RWPE1 (cell line): ENCODE measurements at regions of chr1 and their contacts with region 1.

Region 1: GRCh38 chr1:78132174-78132947 is 86.6 kb downstream of the GIPC2 start:
- DNase-seq: no peak
- H3K27ac ChIP-seq: no peak overlapping the region
- CTCF ChIP-seq: no peak

Region 2: DNA sequence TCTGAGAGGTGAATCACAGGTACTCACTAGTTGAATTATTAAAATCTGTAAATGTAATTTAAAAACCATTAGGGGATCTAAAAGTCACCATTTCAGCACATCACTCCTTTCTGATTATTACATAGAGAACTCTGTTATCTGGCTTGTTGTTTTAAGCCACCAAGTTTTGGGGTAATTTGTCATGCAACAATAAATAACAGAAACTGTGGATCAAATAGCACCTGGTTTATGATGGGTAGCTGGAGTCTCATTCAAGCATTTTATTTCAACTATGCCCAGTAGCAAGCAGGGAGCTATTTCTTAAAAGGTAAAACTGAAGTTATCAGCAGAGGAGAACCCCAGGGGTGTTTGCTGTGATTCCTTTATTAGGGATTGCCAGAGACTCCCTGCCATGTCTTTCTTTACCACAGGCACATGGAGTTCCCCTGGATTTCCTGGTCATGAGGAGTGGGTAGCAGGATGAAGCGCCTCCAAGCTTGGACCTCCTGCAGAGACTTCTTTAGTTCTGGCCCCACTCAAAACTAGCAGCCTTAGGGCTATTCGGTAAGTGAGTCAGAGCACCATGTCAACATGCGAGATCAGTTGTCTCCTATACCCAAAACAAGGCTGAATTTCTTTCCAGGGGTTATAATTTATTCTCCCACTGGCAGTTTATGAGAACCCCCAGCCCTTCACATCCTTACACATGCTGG is 92.6 kb after region 1 on chr1:
- CTCF ChIA-PET with region 1: no interaction called
- POLR2A ChIA-PET with region 1: no interaction called
- DNase-seq: no peak
- H3K27ac ChIP-seq: no peak overlapping the region
- CTCF ChIP-seq: no peak

Region 3: DNA sequence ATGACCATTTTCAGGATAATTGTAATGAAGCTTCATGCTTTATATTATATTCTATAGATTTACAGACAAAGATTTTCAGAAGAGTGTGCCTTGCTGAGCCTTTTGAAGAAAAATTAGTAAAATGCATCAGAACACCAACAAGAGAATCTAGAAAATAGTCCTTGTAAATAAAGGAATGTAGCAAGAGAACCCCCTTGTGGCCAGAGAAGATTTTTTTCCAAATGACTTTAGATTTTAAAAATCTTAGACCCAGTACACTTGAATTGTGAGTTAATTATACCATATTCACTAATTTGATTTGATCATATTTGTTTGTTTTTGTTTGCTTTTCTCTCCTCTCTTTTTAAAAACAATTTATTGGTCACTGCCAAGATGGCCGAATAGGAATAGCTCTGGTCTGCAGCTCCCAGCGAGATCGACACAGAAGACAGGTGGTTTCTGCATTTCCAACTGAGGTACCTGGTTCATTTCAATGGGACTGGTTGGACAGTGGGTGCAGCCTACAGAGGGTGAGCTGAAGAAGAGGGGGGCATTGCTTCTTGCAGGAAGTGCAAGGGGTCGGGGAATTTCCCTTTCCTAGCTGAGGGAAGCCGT is 475.1 kb after region 1 on chr1:
- CTCF ChIA-PET with region 1: interaction called, 36 read pairs
- POLR2A ChIA-PET with region 1: no interaction called
- DNase-seq: peak; percentile 51
- H3K27ac ChIP-seq: no peak overlapping the region
- CTCF ChIP-seq: peak; percentile 79; the same call in 1 of the 2 replicates

Region 4: DNA sequence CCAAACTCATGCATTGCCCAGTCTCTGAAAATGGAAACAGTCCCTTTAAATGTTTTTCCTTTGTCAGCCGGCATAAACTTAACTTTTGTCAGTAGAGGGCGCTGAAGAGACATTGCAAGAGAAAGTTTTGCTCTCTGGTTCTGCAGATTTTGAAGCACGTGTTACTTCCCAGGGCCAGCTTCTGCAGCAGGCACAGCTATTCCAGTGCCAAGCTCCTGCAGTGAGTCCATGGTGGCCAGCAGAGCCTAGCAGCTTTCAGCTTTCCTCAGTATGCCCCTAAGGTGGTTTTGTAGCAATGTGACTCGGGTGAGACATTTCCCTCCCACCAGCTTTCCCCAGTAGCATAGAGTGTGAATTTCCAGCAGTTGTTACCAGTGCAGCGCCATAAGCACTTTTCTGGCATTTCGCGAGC is 485.3 kb after region 1 on chr1:
- CTCF ChIA-PET with region 1: interaction called, 10 read pairs
- POLR2A ChIA-PET with region 1: no interaction called
- DNase-seq: peak; percentile 46
- H3K27ac ChIP-seq: no peak overlapping the region
- CTCF ChIP-seq: peak; percentile 84